ENCODE measurements at regions of chr2 and their contacts with region 1.

Region 1: GRCh38 chr2:95022309-95023221 is 2.9 kb upstream of the MAL start:
- DNase-seq: peak; percentile 53
- H3K4me3 ChIP-seq: no peak overlapping the region
- H3K27ac ChIP-seq: no peak overlapping the region
- H3K4me1 ChIP-seq: no peaks in the 10 kb centered on the region
- H3K27me3 ChIP-seq: peaks cover 14% of the 10 kb centered on the region
- CTCF ChIP-seq: peak; percentile 95 to 96

Region 2: GRCh38 chr2:94861308-94862152 is 161.0 kb before region 1 on chr2:
- CTCF ChIA-PET with region 1: no interaction called
- dilution Hi-C with region 1: no loop called
- in situ Hi-C with region 1: no loop called
- intact Hi-C with region 1: no loop called
- DNase-seq: no peak
- H3K4me3 ChIP-seq: peak overlapping the region in 1 of 3 experiments; percentile 18
- H3K27ac ChIP-seq: no peak overlapping the region
- H3K4me1 ChIP-seq: peaks cover 6% of the 10 kb centered on the region
- H3K27me3 ChIP-seq: peaks cover 16% of the 10 kb centered on the region
- CTCF ChIP-seq: no peak

Region 3: GRCh38 chr2:95052310-95052709 is 29.7 kb after region 1 on chr2:
- CTCF ChIA-PET with region 1: no interaction called
- dilution Hi-C with region 1: no loop called
- in situ Hi-C with region 1: no loop called
- intact Hi-C with region 1: loop called (anchors 1 kb)
- DNase-seq: peak; percentile 93
- H3K4me3 ChIP-seq: no peak overlapping the region
- H3K27ac ChIP-seq: no peak overlapping the region
- H3K4me1 ChIP-seq: peaks cover 18% of the 10 kb centered on the region
- H3K27me3 ChIP-seq: no peaks in the 10 kb centered on the region
- CTCF ChIP-seq: no peak

Region 4: GRCh38 chr2:95115418-95115817 is 92.9 kb after region 1 on chr2:
- CTCF ChIA-PET with region 1: no interaction called
- dilution Hi-C with region 1: no loop called
- in situ Hi-C with region 1: no loop called
- intact Hi-C with region 1: loop called (anchors 1 kb)
- DNase-seq: peak; percentile 66
- H3K4me3 ChIP-seq: no peak overlapping the region
- H3K27ac ChIP-seq: no peak overlapping the region
- H3K4me1 ChIP-seq: peaks cover 1% of the 10 kb centered on the region
- H3K27me3 ChIP-seq: no peaks in the 10 kb centered on the region
- CTCF ChIP-seq: peak; percentile 90 to 92

Measured in mammary epithelial cell (primary cell).